ENCODE measurements at regions of chr9 and their contacts with region 1.

Region 1: GRCh38 chr9:130313103-130313858 is 47.7 kb downstream of the HMCN2 start:
- DNase-seq: no peak
- H3K4me3 ChIP-seq: no peak overlapping the region
- H3K27ac ChIP-seq: no peak overlapping the region
- H3K4me1 ChIP-seq: peaks cover 0 to 13% (median 2%) of the 10 kb centered on the region in 4 experiments; a peak in 4 of 7 replicates
- H3K27me3 ChIP-seq: no peaks in the 10 kb centered on the region
- CTCF ChIP-seq: no peak
- EP300 ChIP-seq: no peak
- POLR2A ChIP-seq: no peak
- RAD21 ChIP-seq: no peak

Region 2: GRCh38 chr9:130263601-130264413 is 49.5 kb before region 1 on chr9:
- CTCF ChIA-PET with region 1: interaction called, 10 read pairs
- POLR2A ChIA-PET with region 1: interaction called, 3 read pairs
- DNase-seq: no peak
- H3K4me3 ChIP-seq: no peak overlapping the region
- H3K27ac ChIP-seq: no peak overlapping the region
- H3K4me1 ChIP-seq: peaks cover 10 to 24% (median 15%) of the 10 kb centered on the region in 4 experiments
- H3K27me3 ChIP-seq: peaks cover 0 to 20% (median 14%) of the 10 kb centered on the region in 4 experiments; a peak in 6 of 7 replicates
- CTCF ChIP-seq: peak in 1 of 3 experiments; percentile 14; a peak in 1 of 4 replicates
- EP300 ChIP-seq: no peak
- POLR2A ChIP-seq: no peak
- RAD21 ChIP-seq: peak; percentile 22 to 45

Region 3: DNA sequence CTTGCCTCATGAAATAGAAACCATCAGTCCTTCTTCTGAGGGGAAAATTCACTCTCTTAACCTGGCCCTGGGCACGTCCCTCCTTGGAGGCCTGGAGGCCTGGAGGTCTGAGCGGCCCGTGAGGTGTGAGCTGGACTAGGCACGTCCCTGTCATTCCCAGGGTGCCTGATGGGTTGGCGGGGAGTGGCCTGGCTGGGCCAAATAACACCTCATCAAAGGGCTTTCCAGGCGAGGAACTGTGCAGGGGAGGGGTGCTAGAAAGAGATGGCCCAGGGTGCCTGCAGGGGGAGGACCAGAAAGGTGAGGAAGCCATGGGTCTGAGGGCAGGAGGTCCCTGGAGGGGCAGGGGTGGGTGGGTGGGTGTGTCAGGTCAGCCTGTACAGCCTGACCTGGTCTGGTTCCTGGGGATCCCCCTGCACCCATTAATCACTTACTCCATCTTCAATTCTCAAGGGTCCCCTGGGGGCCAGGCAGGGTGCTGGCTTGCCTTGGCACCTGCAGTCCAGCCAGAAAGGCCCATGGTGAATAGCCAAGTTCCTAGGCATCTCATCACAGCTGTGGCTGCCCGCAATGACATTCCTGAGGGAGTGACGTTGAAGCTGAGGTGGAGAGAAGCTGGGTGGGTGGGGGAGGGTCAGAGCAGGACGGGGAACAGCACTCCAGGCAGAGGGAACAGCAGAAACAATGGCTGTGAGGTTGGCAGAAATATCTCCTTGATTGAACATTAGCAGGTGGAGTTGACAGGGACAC is 37.3 kb before region 1 on chr9:
- CTCF ChIA-PET with region 1: no interaction called
- POLR2A ChIA-PET with region 1: no interaction called
- DNase-seq: no peak
- H3K4me3 ChIP-seq: no peak overlapping the region
- H3K27ac ChIP-seq: no peak overlapping the region
- H3K4me1 ChIP-seq: peaks cover 0 to 2% (median 0%) of the 10 kb centered on the region in 4 experiments; a peak in 1 of 7 replicates
- H3K27me3 ChIP-seq: no peaks in the 10 kb centered on the region
- CTCF ChIP-seq: no peak
- EP300 ChIP-seq: no peak
- POLR2A ChIP-seq: no peak
- RAD21 ChIP-seq: no peak

Region 4: DNA sequence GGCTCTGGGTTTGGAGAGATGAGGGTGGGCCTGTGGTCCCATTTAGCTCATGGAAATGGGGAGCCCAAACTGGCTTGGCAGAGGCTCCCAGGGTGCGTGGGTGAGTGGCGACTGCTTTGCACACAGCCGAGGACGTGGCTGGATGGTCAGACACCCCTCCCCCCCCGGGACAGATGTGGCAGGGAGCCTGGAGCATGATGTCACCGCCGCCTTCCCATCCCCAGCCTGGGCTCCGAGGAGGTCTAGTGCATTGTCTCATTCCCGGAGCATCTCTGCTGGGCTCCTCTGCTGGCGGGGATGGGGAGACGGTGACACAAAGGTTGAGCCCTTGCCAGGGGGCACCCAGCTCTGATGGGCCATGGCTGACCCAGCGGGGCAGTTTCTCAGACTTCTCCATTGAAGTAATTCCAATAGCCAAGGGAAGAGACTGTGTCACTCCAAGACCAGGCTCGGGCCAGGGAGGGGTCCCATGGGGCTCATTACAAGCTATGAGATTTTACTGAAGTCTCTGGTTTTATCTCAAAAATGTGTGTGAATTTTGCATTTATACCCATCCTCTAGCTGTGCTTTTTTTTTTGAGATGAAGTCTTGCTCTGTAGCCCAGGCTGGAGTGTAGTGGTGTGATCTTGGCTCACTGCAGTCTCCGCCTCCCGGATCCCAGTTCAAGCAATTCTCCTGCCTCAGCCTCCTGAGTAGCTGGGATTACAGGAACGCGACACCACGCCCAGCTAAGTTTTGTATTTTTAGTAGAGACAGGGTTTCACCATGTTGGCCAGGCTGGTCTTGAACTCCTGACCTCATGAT is 11.6 kb before region 1 on chr9:
- CTCF ChIA-PET with region 1: interaction called, 12 read pairs
- POLR2A ChIA-PET with region 1: interaction called, 3 read pairs
- DNase-seq: no peak
- H3K4me3 ChIP-seq: no peak overlapping the region
- H3K27ac ChIP-seq: no peak overlapping the region
- H3K4me1 ChIP-seq: peaks cover 0 to 2% (median 0%) of the 10 kb centered on the region in 4 experiments; a peak in 2 of 7 replicates
- H3K27me3 ChIP-seq: no peaks in the 10 kb centered on the region
- CTCF ChIP-seq: no peak
- EP300 ChIP-seq: no peak
- POLR2A ChIP-seq: no peak
- RAD21 ChIP-seq: no peak

Region 5: DNA sequence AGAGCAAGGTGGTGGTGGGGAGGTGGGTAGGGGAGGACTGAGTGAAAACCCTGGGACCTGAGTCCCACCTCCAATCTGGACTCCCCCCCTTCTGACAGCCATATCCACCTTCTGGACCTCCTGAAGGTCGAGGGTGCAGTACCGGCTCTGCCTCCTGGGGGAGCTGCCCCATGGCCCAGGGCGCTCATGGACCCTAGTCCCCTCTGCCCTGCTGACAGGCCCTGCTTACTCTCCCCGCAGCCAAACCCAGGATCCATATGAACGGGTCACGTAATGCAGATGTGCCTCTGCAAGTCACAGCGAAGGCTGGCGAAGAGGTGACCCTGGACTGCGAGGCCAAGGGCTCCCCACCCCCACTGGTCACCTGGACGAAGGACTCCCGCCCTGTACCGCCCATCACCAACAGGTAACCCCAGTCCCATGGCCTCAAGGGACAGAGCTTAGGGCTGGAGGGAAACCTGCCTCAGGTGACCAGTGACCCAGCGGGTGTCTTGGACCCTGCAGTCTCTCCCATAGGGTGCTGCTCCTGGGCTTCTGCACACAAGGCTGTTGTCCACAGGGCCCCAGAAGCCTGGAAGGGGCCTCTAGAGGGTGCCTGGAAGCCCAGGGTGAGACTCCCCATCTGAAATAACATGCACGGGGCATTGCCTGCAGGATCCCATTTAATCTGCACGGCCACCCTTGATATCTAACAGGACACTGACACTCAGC is 13.9 kb after region 1 on chr9:
- CTCF ChIA-PET with region 1: interaction called, 21 read pairs
- POLR2A ChIA-PET with region 1: interaction called, 4 read pairs
- DNase-seq: peak in 1 of 2 experiments; percentile 92
- H3K4me3 ChIP-seq: no peak overlapping the region
- H3K27ac ChIP-seq: peak overlapping the region; percentile 43; the same call in 1 of the 2 replicates
- H3K4me1 ChIP-seq: no peaks in the 10 kb centered on the region; a peak in 1 of 7 replicates
- H3K27me3 ChIP-seq: no peaks in the 10 kb centered on the region
- CTCF ChIP-seq: peak in 2 of 3 experiments; percentile 66 to 84; a peak in 3 of 4 replicates
- EP300 ChIP-seq: no peak
- POLR2A ChIP-seq: no peak
- RAD21 ChIP-seq: peak; percentile 53 to 68

Region 6: DNA sequence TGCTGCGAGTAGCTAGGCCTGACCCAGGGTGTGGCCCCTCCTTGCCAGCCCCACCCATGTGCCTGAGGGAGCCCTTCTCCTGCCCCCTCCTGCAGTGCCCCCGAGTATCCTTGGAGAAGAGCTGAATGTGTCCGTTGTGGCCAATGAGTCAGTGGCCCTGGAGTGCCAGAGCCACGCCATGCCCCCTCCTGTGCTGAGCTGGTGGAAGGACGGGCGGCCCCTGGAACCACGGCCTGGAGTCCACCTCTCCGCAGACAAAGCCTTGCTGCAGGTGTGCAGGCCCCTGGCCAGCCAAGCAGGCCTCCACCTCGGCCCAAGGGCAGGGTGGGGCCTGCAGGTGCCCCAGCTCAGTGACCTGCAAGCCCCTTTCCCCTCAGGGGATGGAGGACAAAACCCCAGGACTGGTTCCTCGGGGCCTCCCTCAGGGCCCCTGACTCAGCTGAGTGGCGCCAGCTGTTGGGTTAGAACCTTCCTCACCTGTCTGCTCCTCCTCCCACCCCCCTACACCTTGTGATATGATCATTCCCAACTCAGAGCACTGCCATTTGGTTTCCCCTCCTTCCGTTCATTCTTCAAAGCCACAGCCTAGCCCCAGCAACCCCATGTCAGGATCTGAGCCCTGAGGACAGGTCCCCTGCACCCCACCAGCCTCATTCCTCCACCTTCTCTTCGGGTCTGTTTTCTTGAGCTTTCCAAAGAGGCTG is 51.5 kb after region 1 on chr9:
- CTCF ChIA-PET with region 1: no interaction called
- POLR2A ChIA-PET with region 1: no interaction called
- DNase-seq: no peak
- H3K4me3 ChIP-seq: no peak overlapping the region
- H3K27ac ChIP-seq: no peak overlapping the region
- H3K4me1 ChIP-seq: no peaks in the 10 kb centered on the region; a peak in 1 of 7 replicates
- H3K27me3 ChIP-seq: no peaks in the 10 kb centered on the region
- CTCF ChIP-seq: no peak
- EP300 ChIP-seq: no peak
- POLR2A ChIP-seq: no peak
- RAD21 ChIP-seq: no peak